ENCODE measurements at regions of chr3 and their contacts with region 1.

Region 1: DNA sequence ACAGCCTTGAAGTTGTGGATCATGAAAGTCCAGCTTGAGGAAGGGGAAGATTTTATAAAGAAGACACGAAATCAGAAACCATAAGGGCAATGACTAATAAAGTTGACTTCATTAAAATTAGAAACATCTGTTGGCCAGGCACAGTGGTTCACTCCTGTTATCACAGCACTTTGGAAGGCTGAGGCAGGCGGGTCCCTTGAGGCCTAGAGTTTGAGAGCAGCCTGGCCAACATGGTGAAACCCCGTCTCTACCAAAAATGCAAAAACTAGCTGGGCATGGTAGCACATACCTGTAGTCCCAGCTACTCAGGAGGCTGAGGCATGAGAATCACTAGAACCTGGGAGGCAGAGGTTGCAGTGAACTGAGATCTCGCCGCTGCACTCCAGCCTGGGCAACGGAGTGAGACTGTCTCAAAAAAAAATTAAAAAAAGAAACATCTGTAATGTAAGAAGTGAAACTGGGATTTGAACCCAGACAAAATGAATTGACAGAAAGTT is 7.9 kb upstream of the UBXN7 start:
- DNase-seq: no peak
- ATAC-seq: no peak
- H3K4me3 ChIP-seq: no peak overlapping the region
- H3K27ac ChIP-seq: no peak overlapping the region
- H3K4me1 ChIP-seq: peaks cover 0 to 5% of the 10 kb centered on the region in 2 experiments; a peak in 3 of 5 replicates
- H3K27me3 ChIP-seq: no peaks in the 10 kb centered on the region
- CTCF ChIP-seq: no peak
- EP300 ChIP-seq: no peak
- POLR2A ChIP-seq: no peak
- RAD21 ChIP-seq: no peak

Region 2: DNA sequence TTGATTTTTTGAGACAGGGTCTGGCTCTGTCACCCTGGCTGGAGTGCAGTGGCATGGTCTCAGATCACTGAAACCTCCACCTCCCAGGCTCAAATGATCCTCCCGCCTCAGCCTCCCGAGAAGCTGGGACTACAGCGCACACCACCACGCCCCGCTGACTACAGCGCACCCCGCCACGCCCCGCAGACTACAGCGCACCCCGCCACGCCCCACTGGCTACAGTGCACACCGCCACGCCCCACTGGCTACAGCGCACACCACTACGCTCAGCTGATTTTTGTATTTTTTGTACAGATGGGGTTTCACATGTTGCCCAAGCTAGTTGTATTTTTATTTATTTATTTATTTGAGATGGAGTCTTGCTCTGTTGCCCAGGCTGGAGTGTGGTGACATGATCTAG is 188.2 kb before region 1 on chr3:
- CTCF ChIA-PET with region 1: interaction called, 10 read pairs
- POLR2A ChIA-PET with region 1: no interaction called
- in situ Hi-C with region 1: no loop called
- intact Hi-C with region 1: loop called (anchors 1 kb)
- DNase-seq: no peak
- ATAC-seq: no peak
- H3K4me3 ChIP-seq: no peak overlapping the region
- H3K27ac ChIP-seq: no peak overlapping the region
- H3K4me1 ChIP-seq: no peaks in the 10 kb centered on the region
- H3K27me3 ChIP-seq: no peaks in the 10 kb centered on the region
- CTCF ChIP-seq: no peak
- EP300 ChIP-seq: no peak
- POLR2A ChIP-seq: no peak
- RAD21 ChIP-seq: no peak

Region 3: GRCh38 chr3:196317687-196318467 is 122.2 kb before region 1 on chr3 and contains the start of gene DYNLT2B:
- CTCF ChIA-PET with region 1: no interaction called
- POLR2A ChIA-PET with region 1: interaction called, 4 read pairs
- in situ Hi-C with region 1: no loop called
- intact Hi-C with region 1: loop called (anchors 5 kb)
- DNase-seq: peak; percentile 95 to 98 (median 96)
- ATAC-seq: peak; percentile 95
- H3K4me3 ChIP-seq: peak within 1 kb of the TSS; percentile 93
- H3K27ac ChIP-seq: peak within 1 kb of the TSS; percentile 94
- H3K4me1 ChIP-seq: peaks cover 4 to 15% of the 10 kb centered on the region in 2 experiments; a peak in 4 of 5 replicates
- H3K27me3 ChIP-seq: no peaks in the 10 kb centered on the region; a peak in 1 of 5 replicates
- CTCF ChIP-seq: peak in 2 of 3 experiments; percentile 22 to 38; a peak in 2 of 6 replicates
- EP300 ChIP-seq: no peak
- POLR2A ChIP-seq: peak; percentile 91
- RAD21 ChIP-seq: peak in 1 of 2 experiments; percentile 35; a peak in 3 of 4 replicates
- polyA plus RNA-seq, gene DYNLT2B: 9.7 to 13.3 TPM